ENCODE measurements at regions of chr1 and their contacts with region 1.

Region 1: GRCh38 chr1:65419681-65420589 is 533 bp upstream of the LEPR start:
- DNase-seq: peak; percentile 97
- ATAC-seq: peak; percentile 95
- H3K4me3 ChIP-seq: peak overlapping the region; percentile 67
- H3K27ac ChIP-seq: peak overlapping the region; percentile 78
- H3K4me1 ChIP-seq: peaks cover 12% of the 10 kb centered on the region
- H3K27me3 ChIP-seq: no peaks in the 10 kb centered on the region
- CTCF ChIP-seq: no peak
- POLR2A ChIP-seq: no peak
- RAD21 ChIP-seq: no peak

Region 2: GRCh38 chr1:65254319-65255034 is 165.5 kb before region 1 on chr1:
- CTCF ChIA-PET with region 1: no interaction called
- POLR2A ChIA-PET with region 1: no interaction called
- dilution Hi-C with region 1: no loop called
- in situ Hi-C with region 1: no loop called
- intact Hi-C with region 1: loop called (anchors 5 kb)
- DNase-seq: peak; percentile 30
- ATAC-seq: peak; percentile 99
- H3K4me3 ChIP-seq: peak overlapping the region; percentile 55
- H3K27ac ChIP-seq: no peak overlapping the region
- H3K4me1 ChIP-seq: no peaks in the 10 kb centered on the region; the same call in 1 of the 2 replicates
- H3K27me3 ChIP-seq: peaks cover 21% of the 10 kb centered on the region
- CTCF ChIP-seq: no peak
- POLR2A ChIP-seq: no peak
- RAD21 ChIP-seq: no peak

Measured in IMR-90 (cell line).